GM23248 (cell line): ENCODE measurements at regions of chr11 and their contacts with region 1.

Region 1: GRCh38 chr11:120096369-120097191 is 41.3 kb downstream of the TRIM29 start:
- DNase-seq: no peak
- H3K4me3 ChIP-seq: no peak overlapping the region
- H3K27ac ChIP-seq: no peak overlapping the region
- H3K4me1 ChIP-seq: no peaks in the 10 kb centered on the region
- H3K27me3 ChIP-seq: peaks cover 51% of the 10 kb centered on the region

Region 2: DNA sequence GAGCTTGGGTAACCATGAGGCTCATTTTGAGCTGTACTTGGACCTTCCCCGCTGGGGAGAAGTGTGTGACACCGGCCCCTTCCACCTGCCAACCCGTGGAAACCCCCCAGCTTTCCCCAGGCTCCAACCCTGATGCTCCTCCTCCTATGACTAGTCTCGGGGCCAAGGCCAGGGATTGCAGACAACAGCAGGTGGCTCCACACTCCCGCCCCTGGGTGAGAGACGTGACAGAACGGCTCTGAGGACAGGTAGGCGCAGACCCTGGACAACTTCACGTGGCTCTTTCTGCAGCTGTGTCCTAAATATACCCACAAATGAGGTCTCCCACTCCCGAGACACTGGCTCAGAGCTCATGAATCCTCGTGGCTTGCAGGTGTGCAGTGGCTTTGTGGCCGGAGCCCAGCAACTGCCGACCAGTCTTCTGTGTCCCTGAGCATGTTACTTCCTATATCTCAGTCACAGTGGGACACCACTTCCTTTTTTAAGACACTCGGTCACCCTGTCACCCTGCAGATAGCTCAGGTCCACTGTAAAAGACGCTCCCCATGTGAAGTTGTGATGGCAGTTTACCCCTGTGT is 422.7 kb before region 1 on chr11:
- in situ Hi-C with region 1: loop called (anchors 10 kb)
- DNase-seq: no peak
- H3K4me3 ChIP-seq: no peak overlapping the region
- H3K27ac ChIP-seq: no peak overlapping the region
- H3K4me1 ChIP-seq: peaks cover 9% of the 10 kb centered on the region
- H3K27me3 ChIP-seq: no peaks in the 10 kb centered on the region